ENCODE measurements at regions of chr17 and their contacts with region 1.

Region 1: GRCh38 chr17:64216338-64217248 is 46.5 kb downstream of the TEX2 start:
- DNase-seq: peak; percentile 73
- CTCF ChIP-seq: peak; percentile 56

Region 2: DNA sequence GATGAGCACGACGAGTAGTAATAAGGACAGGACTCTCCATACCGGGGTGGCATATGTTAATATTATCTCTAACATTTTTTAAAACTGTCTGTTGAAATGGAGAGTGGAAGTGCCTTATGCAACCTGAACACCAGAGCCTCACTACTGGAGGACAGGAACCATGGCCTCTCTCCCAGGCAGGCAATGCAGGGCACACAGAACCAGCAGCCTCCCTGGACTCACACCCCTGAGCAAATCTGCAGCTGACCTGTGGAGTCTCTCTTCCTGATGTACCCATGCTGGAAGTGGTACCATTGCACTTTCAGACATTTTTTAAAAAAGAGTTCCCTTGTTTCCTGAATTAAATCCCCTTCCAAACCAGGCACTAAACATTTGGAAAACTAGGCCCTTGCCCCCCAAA is 31.5 kb before region 1 on chr17:
- CTCF ChIA-PET with region 1: no interaction called
- POLR2A ChIA-PET with region 1: no interaction called
- DNase-seq: no peak
- CTCF ChIP-seq: no peak

Region 3: DNA sequence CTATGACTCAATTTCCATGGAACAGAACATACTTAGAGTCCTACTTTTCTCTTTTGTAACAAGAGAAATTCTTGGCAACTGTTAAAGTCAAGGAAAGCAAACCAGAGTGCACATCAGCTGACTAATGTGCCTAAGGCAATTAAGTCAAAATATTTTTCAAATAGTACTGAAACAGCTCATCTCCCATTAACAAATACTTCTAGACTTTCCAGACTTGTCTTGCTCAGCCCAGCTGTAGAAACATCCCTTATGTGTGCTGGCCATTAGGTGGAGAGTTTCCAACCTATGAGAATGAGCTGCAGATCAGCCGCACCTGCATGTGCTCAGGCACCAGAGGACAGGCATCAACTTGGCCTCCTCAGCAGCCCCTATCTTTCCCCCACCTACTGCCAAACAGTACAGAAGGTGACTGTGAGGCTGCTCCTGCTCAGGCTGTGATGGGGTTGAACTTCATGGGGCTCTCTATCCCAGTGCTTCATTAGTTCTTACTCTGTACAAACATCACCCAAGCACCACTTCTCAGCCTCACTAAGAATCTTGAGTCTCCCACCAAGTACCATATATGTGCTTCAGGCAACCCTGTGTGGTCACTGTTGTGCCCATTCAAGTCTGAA is 14.3 kb after region 1 on chr17:
- CTCF ChIA-PET with region 1: interaction called, 28 read pairs
- POLR2A ChIA-PET with region 1: no interaction called
- DNase-seq: no peak
- CTCF ChIP-seq: no peak

Measured in GM10248 (cell line).